Caco-2 (cell line): ENCODE measurements at regions of chr9 and their contacts with region 1.

Region 1: GRCh38 chr9:6757456-6758247 is at the start of gene KDM4C:
- DNase-seq: peak; percentile 94 to 95
- H3K4me3 ChIP-seq: peak within 1 kb of the TSS; percentile 94
- H3K4me3 Mint-ChIP-seq: peak within 1 kb of the TSS; percentile 97
- H3K27ac Mint-ChIP-seq: peak within 1 kb of the TSS; percentile 99
- H3K4me1 ChIP-seq: peaks cover 15% of the 10 kb centered on the region
- H3K4me1 Mint-ChIP-seq: no peaks in the 10 kb centered on the region
- H3K27me3 ChIP-seq: no peaks in the 10 kb centered on the region
- H3K27me3 Mint-ChIP-seq: no peaks in the 10 kb centered on the region
- CTCF ChIP-seq: no peak
- total RNA-seq, gene KDM4C: 40.3 and 41.0 TPM in 2 replicates

Region 2: GRCh38 chr9:6535594-6535993 is 222.1 kb before region 1 on chr9:
- CTCF ChIA-PET with region 1: no interaction called
- POLR2A ChIA-PET with region 1: no interaction called
- intact Hi-C with region 1: no loop called
- DNase-seq: no peak
- H3K4me3 ChIP-seq: no peak overlapping the region
- H3K4me3 Mint-ChIP-seq: no peak overlapping the region
- H3K27ac Mint-ChIP-seq: no peak overlapping the region
- H3K4me1 ChIP-seq: no peaks in the 10 kb centered on the region
- H3K4me1 Mint-ChIP-seq: no peaks in the 10 kb centered on the region
- H3K27me3 ChIP-seq: no peaks in the 10 kb centered on the region
- H3K27me3 Mint-ChIP-seq: no peaks in the 10 kb centered on the region
- CTCF ChIP-seq: no peak

Region 3: GRCh38 chr9:6715755-6716643 is 41.7 kb before region 1 on chr9:
- CTCF ChIA-PET with region 1: no interaction called
- POLR2A ChIA-PET with region 1: interaction called, 37 read pairs
- intact Hi-C with region 1: loop called (anchors 1 kb)
- DNase-seq: peak; percentile 93 to 94
- H3K4me3 ChIP-seq: peak overlapping the region; percentile 60
- H3K4me3 Mint-ChIP-seq: peak overlapping the region; percentile 94
- H3K27ac Mint-ChIP-seq: peak overlapping the region; percentile 97
- H3K4me1 ChIP-seq: peaks cover 7% of the 10 kb centered on the region; the same call in 1 of the 2 replicates
- H3K4me1 Mint-ChIP-seq: peaks cover 11% of the 10 kb centered on the region
- H3K27me3 ChIP-seq: no peaks in the 10 kb centered on the region
- H3K27me3 Mint-ChIP-seq: no peaks in the 10 kb centered on the region
- CTCF ChIP-seq: no peak

Region 4: DNA sequence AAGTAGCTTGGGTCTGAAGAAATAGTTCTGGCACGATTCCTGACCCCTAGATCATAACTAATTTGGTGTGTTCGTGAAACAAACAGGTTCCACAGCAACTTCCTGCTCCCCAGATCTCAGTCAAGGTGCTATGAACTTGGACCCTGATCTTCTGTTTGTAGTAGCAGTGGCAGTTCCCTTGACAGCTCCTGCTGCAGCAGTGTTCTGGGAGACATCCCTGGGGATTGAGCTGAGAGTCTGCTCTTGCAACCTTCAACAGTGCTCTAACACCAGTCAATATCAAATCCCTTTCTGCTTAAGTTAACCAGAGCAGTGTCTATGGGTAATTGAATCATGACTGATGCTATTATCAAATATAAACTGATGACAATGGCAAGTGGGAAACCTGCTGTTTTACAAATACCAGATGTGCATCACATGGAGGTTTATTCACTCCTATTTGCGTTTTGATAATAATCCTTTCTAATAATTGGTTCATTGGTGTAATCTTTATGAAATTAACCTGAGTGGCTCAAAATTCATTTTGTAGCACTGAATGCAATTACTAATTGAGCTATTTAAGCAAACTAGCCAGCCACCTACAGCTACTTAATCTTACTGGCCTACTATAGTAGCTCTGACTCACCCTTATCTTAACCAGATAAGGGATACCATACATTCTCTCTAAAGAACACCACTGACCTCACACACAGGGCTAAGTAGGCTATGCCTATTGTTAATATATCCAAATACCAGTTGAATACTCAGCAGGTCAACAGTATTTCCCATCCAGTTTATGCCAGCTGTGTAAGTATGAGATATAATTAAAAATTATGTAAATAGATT is 22.0 kb after region 1 on chr9:
- CTCF ChIA-PET with region 1: interaction called, 5 read pairs
- POLR2A ChIA-PET with region 1: interaction called, 17 read pairs
- intact Hi-C with region 1: no loop called
- DNase-seq: peak in 1 of 2 experiments; percentile 40
- H3K4me3 ChIP-seq: no peak overlapping the region
- H3K4me3 Mint-ChIP-seq: no peak overlapping the region
- H3K27ac Mint-ChIP-seq: peak overlapping the region; percentile 51
- H3K4me1 ChIP-seq: peaks cover 59% of the 10 kb centered on the region
- H3K4me1 Mint-ChIP-seq: peaks cover 16% of the 10 kb centered on the region
- H3K27me3 ChIP-seq: no peaks in the 10 kb centered on the region
- H3K27me3 Mint-ChIP-seq: no peaks in the 10 kb centered on the region
- CTCF ChIP-seq: no peak

Region 5: GRCh38 chr9:6788162-6789016 is 30.7 kb after region 1 on chr9:
- CTCF ChIA-PET with region 1: interaction called, 3 read pairs
- POLR2A ChIA-PET with region 1: interaction called, 14 read pairs
- intact Hi-C with region 1: loop called (anchors 2 kb)
- DNase-seq: peak; percentile 59 to 63
- H3K4me3 ChIP-seq: no peak overlapping the region
- H3K4me3 Mint-ChIP-seq: peak overlapping the region; percentile 85
- H3K27ac Mint-ChIP-seq: peak overlapping the region; percentile 92
- H3K4me1 ChIP-seq: peaks cover 47% of the 10 kb centered on the region
- H3K4me1 Mint-ChIP-seq: peaks cover 34% of the 10 kb centered on the region
- H3K27me3 ChIP-seq: no peaks in the 10 kb centered on the region
- H3K27me3 Mint-ChIP-seq: no peaks in the 10 kb centered on the region
- CTCF ChIP-seq: no peak